Activated T-helper 1 cell treated with anti-CD3 and anti-CD28 coated beads, Interleukin-12 subunit alpha, Interleukin-12 subunit beta, Interleukin-2, Interleukin-4 antibody, amounts not matched to agents 30 ng/mL and 10 ng/mL and 1 ng/mL, durations not matched to agents 14 hours and 24 hours and 36 hours (primary cell): ENCODE measurements at regions of chrX and their contacts with region 1.

Region 1: DNA sequence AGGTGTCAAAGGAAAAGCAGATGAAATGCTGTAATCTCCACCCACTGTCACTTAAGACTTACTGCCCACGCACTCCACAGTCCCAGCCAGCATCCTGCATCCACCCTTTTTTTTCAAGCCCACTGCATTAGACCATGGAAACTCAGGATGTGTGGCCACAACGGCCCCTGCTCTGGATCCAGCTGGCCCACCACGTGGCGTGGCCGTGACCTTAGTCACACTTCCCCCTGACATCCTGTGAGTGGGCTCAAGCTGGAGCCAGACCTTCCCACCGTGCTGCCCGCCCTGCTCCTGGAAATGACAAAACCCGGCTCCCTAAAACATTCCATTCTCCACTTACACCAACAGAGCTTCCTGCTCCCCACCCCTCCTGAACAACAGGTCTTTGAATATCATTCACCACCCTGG is 588.3 kb upstream of the DIPK2B start:
- DNase-seq: no peak
- H3K4me3 Mint-ChIP-seq: peak overlapping the region; percentile 11
- H3K27ac Mint-ChIP-seq: peak overlapping the region; percentile 64
- H3K4me1 Mint-ChIP-seq: peaks cover 67% of the 10 kb centered on the region
- H3K27me3 Mint-ChIP-seq: no peaks in the 10 kb centered on the region

Region 2: DNA sequence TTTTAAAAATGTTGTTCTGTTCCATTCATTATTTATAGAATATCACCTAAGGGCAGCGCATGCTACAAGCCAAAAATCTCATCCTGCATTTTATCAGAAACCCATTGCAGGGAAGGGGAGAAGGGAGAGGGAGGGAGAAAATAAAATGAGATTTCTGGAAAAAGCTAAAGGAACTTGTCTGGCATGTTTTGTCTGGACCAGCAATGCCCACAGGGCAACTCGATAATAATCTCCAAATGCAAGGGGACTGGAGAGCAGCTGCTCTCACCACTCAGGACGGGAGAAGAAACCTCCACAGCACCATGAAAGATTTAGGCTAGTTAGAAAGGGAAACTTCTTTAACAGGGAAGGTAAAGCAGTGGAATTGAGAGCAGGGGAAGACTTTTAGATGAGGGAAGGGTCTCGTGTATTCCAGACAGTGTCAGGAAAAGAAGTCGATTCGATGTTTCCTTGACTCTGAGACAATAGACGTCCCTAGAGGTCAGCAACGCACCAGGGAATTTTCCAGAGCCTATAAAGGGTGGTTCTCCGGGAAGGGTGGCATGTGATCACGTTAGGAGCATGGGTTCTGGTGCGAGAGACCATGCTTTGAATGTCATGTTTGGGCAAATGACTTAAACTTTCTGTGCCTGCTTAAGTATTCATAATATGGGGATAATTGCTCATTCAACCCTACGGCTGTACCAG is 1683.6 kb before region 1 on chrX:
- intact Hi-C with region 1: no loop called
- DNase-seq: no peak
- H3K4me3 Mint-ChIP-seq: no peak overlapping the region
- H3K27ac Mint-ChIP-seq: no peak overlapping the region
- H3K4me1 Mint-ChIP-seq: no peaks in the 10 kb centered on the region
- H3K27me3 Mint-ChIP-seq: no peaks in the 10 kb centered on the region

Region 3: DNA sequence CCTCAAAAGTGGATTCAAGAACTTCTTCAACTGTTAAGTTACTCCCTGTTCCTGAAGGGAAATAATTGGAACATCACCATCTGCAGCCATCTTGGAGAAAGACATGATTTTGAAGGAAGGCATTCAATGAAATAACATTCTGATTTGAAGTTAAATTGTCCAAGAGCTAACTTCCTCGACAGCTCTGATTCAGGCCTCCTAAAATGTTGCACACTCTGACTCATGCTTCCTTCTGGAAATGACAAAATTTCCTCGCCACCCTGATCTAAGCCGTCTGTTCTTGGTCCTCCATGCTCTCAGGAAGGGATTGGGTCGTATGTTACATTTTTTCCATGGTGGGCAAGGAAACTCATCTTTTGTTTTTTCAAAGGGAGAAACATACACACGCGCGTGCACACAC is 91.4 kb before region 1 on chrX:
- intact Hi-C with region 1: no loop called
- DNase-seq: no peak
- H3K4me3 Mint-ChIP-seq: no peak overlapping the region
- H3K27ac Mint-ChIP-seq: peak overlapping the region; percentile 23
- H3K4me1 Mint-ChIP-seq: peaks cover 6% of the 10 kb centered on the region
- H3K27me3 Mint-ChIP-seq: no peaks in the 10 kb centered on the region

Region 4: DNA sequence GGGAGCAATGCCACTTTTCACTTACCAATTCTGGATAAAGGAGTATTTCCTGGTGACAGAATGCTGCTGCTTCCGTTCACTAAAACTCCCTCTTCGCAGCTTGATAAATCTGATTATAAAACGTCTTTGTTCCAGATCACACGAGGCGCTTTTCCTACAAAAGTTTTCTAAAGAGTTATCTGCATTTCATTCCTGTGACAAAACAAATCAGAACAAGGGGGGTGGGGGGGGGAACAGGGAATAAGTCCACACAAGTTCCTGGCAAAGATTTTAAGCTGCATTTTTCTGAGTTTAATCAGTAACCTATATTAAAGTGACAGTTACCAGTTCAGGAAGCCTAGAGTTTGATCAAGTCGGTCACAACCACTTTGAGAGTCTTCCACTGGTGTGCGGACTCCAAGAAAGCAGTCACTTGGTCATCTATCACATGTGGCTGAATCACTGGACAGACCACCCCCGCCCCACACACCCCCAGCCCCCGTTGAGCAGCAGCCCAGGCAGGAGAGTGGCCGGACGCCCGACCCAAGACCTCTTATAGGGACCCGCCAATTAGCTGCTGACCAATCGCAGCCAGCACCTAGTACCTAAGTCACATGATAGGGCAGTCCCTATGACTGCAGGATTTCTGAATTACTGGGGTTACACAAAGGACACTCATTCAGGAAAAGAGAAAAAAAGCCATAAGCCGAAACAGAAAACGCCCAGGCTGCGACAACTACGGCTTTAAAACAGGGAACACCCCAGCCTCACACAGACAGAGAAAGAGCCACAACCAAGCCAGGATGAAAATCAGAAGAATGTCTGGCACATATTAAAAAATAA is 19.0 kb before region 1 on chrX:
- intact Hi-C with region 1: loop called (anchors 2 kb)
- DNase-seq: peak; percentile 6
- H3K4me3 Mint-ChIP-seq: peak overlapping the region; percentile 98
- H3K27ac Mint-ChIP-seq: peak overlapping the region; percentile 98
- H3K4me1 Mint-ChIP-seq: peaks cover 59% of the 10 kb centered on the region
- H3K27me3 Mint-ChIP-seq: no peaks in the 10 kb centered on the region